ENCODE measurements at regions of chr2 and their contacts with region 1.

Region 1: DNA sequence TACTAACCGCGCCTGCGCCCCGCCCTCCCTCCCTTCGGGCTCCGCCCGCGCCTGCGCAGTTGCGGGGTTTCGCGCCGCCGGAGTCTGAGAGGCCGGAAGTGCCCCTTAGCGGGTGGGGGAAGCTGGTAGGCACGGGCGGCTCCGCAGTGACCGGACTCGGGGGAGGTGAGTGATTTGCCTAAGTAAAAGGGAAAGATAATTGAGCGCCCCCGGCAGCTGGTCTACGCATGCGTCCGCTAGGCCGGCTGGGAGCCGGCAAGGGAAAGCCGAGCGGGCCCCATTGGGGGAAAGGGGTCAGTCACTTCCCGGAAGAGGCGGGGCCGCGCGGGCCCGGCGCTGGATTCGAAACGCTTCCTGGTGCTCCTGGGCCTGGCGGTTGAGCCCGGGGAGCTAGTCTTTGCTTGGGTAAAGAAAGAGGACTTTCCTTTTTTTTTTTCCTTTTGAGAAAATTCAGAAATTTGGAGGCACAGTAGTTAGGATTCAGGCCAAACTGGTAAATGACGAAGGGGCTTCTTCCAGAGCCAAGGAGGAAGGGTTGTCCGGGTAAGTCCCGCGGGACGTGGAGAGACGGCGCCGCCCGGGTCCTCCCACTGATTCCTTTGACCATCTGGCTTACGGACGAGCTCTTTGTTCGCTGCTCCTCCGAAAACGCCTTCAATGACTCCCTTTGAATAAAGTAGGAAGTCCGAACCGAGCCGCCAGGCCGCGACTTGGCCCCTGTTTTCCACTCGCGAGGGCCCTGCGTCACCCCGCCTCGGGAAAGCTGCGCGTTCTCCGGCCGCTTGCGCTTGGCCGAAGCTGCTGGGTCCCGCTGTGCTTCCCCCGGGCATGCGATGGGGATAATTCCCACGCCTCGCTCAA is at the starts of genes GEN1 and SMC6:
- DNase-seq: peak; percentile 82 to 87
- H3K4me3 ChIP-seq: peak within 1 kb of the TSS; percentile 96
- H3K27ac ChIP-seq: peak within 1 kb of the TSS; percentile 93
- H3K4me1 ChIP-seq: peaks cover 28% of the 10 kb centered on the region
- H3K27me3 ChIP-seq: no peaks in the 10 kb centered on the region
- CTCF ChIP-seq: no peak
- total RNA-seq, gene GEN1: 14.4 and 28.3 TPM in 2 replicates
- total RNA-seq, gene SMC6: 15.5 and 19.2 TPM in 2 replicates

Region 2: GRCh38 chr2:16943279-16943958 is 810.6 kb before region 1 on chr2:
- CTCF ChIA-PET with region 1: no interaction called
- POLR2A ChIA-PET with region 1: no interaction called
- intact Hi-C with region 1: no loop called
- DNase-seq: no peak
- H3K4me3 ChIP-seq: no peak overlapping the region
- H3K27ac ChIP-seq: no peak overlapping the region
- H3K4me1 ChIP-seq: no peaks in the 10 kb centered on the region
- H3K27me3 ChIP-seq: no peaks in the 10 kb centered on the region
- CTCF ChIP-seq: no peak

Region 3: DNA sequence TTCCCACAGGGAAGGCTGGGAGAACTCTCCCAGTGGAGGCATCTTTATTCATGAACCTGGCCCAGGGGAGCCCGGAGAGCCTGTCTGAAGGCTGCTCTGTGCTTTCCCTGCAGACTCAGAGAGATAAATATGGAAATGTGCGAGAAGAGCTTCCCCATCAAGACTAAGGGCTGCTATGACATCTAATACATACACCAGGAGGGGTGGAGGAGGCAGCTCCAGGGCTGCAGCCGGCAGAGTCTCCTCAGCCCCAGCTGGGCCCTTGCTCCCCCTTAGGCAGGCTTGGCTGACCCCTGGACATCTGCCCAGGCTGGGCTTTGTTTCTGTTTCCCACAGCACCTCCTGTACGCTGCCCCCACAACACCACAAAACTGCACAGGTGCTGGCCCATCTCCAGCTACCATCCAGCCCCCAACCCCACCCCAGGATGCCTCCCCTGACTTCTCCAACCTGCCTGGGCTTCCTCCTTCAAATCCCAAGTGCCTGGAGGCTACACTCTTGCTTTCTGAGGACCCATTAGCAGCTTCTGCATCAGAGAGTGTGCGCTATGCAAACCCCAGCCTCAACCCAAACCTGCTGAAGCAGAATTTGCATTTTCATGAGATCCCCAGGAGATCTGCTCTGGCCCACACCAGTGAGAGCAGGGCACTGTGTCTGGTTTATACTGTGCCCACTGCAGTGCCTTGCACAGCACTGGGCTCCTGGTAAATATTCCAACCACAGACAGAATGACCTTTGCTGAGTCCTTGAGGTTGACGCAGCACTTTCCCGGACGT is 116.7 kb before region 1 on chr2:
- CTCF ChIA-PET with region 1: no interaction called
- POLR2A ChIA-PET with region 1: no interaction called
- intact Hi-C with region 1: no loop called
- DNase-seq: no peak
- H3K4me3 ChIP-seq: no peak overlapping the region
- H3K27ac ChIP-seq: no peak overlapping the region
- H3K4me1 ChIP-seq: no peaks in the 10 kb centered on the region
- H3K27me3 ChIP-seq: no peaks in the 10 kb centered on the region
- CTCF ChIP-seq: no peak

Region 4: DNA sequence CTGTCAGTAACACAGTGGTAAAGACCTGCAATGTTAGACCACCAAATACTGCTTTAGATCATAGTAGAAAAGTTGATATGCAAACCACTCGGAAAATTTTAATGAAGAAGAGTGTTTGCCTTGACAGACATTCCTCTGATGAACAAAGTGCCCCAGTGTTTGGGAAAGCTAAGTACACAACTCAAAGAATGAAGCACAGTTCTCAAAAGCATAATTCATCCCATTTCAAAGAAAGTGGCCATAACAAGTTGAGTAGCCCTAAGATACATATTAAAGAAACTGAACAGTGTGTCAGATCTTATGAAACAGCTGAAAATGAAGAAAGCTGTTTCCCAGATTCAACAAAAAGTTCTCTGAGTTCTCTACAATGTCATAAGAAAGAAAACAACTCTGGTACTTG is 27.4 kb after region 1 on chr2:
- CTCF ChIA-PET with region 1: interaction called, 11 read pairs
- POLR2A ChIA-PET with region 1: no interaction called
- intact Hi-C with region 1: no loop called
- DNase-seq: no peak
- H3K4me3 ChIP-seq: no peak overlapping the region
- H3K27ac ChIP-seq: no peak overlapping the region
- H3K4me1 ChIP-seq: no peaks in the 10 kb centered on the region
- H3K27me3 ChIP-seq: no peaks in the 10 kb centered on the region
- CTCF ChIP-seq: no peak

Measured in PC-9 (cell line).